GM12878 (cell line): ENCODE measurements at regions of chr7 and their contacts with region 1.

Region 1: GRCh38 chr7:117212969-117213877 is 109.6 kb downstream of the WNT2 start:
- DNase-seq: peak; percentile 42
- ATAC-seq: peak; percentile 88
- H3K4me3 ChIP-seq: no peak overlapping the region
- H3K27ac ChIP-seq: no peak overlapping the region
- H3K4me1 ChIP-seq: no peaks in the 10 kb centered on the region
- H3K27me3 ChIP-seq: no peaks in the 10 kb centered on the region
- CTCF ChIP-seq: peak; percentile 88 to 97 (median 92)
- EP300 ChIP-seq: no peak
- POLR2A ChIP-seq: no peak
- RAD21 ChIP-seq: peak; percentile 87

Region 2: DNA sequence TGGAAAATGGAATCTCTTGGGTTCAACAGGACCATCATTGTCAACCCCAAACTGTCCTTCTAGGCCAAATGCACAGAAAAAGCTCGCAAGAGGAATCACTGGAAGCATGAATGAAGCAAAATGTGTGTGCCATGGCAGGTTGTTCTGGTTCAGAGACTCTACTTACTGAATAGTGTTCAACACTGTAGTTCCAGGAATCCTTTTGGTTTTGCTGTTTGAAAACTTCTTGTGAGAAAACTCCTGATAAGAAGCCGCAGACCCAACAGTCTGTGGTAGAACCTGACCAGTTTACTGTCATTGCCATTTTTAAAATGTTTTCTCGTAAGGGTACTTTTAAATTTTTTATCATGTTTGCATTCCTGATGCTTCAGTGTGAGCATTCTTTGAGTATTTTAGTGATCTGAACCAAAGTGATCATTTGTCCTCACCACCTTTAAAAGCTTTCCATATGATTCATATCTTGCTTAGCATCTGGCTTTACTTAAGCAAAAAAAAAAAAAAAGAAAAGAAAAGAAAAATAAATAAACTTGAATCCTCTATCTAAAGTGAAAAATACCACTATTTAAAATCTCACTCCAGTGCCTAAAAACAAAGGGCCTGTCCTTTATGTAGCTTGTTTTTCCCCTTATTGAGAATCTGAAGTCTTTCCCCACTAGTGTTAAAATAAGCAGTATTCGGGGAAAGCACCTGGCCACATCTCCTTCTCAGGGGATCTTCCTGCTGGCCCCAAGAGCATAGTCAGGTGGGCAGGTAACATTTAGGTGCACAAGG is 17.2 kb after region 1 on chr7:
- CTCF ChIA-PET with region 1: interaction called, 24 read pairs
- POLR2A ChIA-PET with region 1: interaction called, 7 read pairs
- RAD21 ChIA-PET with region 1: interaction called, 25 read pairs
- SMC1A ChIA-PET with region 1: interaction called, 16 read pairs
- in situ Hi-C with region 1: no loop called
- intact Hi-C with region 1: no loop called
- DNase-seq: peak; percentile 66
- ATAC-seq: peak; percentile 92
- H3K4me3 ChIP-seq: no peak overlapping the region
- H3K27ac ChIP-seq: peak overlapping the region; percentile 74
- H3K4me1 ChIP-seq: peaks cover 12% of the 10 kb centered on the region
- H3K27me3 ChIP-seq: no peaks in the 10 kb centered on the region
- CTCF ChIP-seq: no peak
- EP300 ChIP-seq: peak; percentile 25 to 64; a peak in 1 of 4 replicates
- POLR2A ChIP-seq: no peak
- RAD21 ChIP-seq: no peak

Region 3: GRCh38 chr7:117312598-117313580 is 99.7 kb after region 1 on chr7:
- CTCF ChIA-PET with region 1: interaction called, 36 read pairs
- POLR2A ChIA-PET with region 1: no interaction called
- RAD21 ChIA-PET with region 1: interaction called, 4 read pairs
- SMC1A ChIA-PET with region 1: interaction called, 32 read pairs
- in situ Hi-C with region 1: no loop called
- intact Hi-C with region 1: loop called (anchors 5 kb)
- DNase-seq: no peak
- ATAC-seq: peak; percentile 48; the same call in 2 of the 3 replicates
- H3K4me3 ChIP-seq: no peak overlapping the region
- H3K27ac ChIP-seq: no peak overlapping the region
- H3K4me1 ChIP-seq: no peaks in the 10 kb centered on the region
- H3K27me3 ChIP-seq: no peaks in the 10 kb centered on the region
- CTCF ChIP-seq: peak in 1 of 3 experiments; percentile 47; a peak in 1 of 6 replicates
- EP300 ChIP-seq: no peak
- POLR2A ChIP-seq: no peak
- RAD21 ChIP-seq: peak; percentile 56

Region 4: GRCh38 chr7:117338020-117338419 is 124.8 kb after region 1 on chr7:
- CTCF ChIA-PET with region 1: interaction called, 11 read pairs
- POLR2A ChIA-PET with region 1: no interaction called
- RAD21 ChIA-PET with region 1: interaction called, 4 read pairs
- SMC1A ChIA-PET with region 1: interaction called, 11 read pairs
- in situ Hi-C with region 1: no loop called
- intact Hi-C with region 1: no loop called
- DNase-seq: no peak
- ATAC-seq: peak; percentile 24; the same call in 1 of the 3 replicates
- H3K4me3 ChIP-seq: no peak overlapping the region
- H3K27ac ChIP-seq: no peak overlapping the region
- H3K4me1 ChIP-seq: no peaks in the 10 kb centered on the region
- H3K27me3 ChIP-seq: no peaks in the 10 kb centered on the region
- CTCF ChIP-seq: peak in 1 of 3 experiments; percentile 19; a peak in 2 of 6 replicates
- EP300 ChIP-seq: no peak
- POLR2A ChIP-seq: no peak
- RAD21 ChIP-seq: peak; percentile 45

Region 5: DNA sequence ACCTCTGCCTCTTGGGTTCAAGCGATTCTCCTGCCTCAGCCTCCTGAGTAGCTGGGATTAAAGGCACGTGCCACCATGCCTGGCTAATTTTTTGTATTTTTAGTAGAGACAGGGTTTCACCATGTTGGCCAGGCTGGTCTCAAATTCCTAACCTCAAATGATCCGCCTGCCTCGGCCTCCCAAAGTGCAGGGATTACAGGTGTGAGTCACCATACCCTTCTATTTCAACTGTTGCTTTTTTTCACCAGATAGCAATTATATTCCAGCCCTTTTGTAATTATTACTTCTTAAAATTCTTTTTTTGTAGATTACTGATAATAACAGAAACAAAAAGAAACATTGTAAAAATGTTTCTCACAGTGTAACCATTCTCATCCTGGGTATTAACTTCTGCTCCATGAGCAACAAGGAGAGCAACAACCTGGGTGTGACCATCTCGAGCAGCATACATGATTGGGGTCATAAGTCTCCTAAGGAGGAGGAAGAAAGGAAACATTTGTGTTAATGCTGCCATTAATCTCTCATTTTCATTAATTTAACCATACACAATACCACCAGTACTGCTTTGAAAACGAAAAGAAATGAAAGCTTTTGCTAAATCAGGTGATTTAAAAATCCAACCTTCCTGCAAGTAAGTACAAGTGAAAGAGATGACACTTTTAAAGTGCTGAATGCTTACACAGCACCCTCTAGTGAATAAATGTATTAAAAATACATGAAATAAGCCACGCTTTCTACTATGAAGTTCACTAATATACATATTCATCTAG is 172.3 kb after region 1 on chr7:
- CTCF ChIA-PET with region 1: interaction called, 99 read pairs
- POLR2A ChIA-PET with region 1: interaction called, 3 read pairs
- RAD21 ChIA-PET with region 1: interaction called, 51 read pairs
- SMC1A ChIA-PET with region 1: interaction called, 109 read pairs
- in situ Hi-C with region 1: loop called (anchors 5 kb)
- intact Hi-C with region 1: loop called (anchors 1 kb)
- DNase-seq: no peak
- ATAC-seq: peak; percentile 90
- H3K4me3 ChIP-seq: no peak overlapping the region
- H3K27ac ChIP-seq: no peak overlapping the region
- H3K4me1 ChIP-seq: no peaks in the 10 kb centered on the region
- H3K27me3 ChIP-seq: no peaks in the 10 kb centered on the region
- CTCF ChIP-seq: peak; percentile 25 to 68 (median 46); a peak in 4 of 6 replicates
- EP300 ChIP-seq: no peak
- POLR2A ChIP-seq: no peak
- RAD21 ChIP-seq: peak; percentile 75